GM13977 (cell line): ENCODE measurements at regions of chr1 and their contacts with region 1.

Region 1: DNA sequence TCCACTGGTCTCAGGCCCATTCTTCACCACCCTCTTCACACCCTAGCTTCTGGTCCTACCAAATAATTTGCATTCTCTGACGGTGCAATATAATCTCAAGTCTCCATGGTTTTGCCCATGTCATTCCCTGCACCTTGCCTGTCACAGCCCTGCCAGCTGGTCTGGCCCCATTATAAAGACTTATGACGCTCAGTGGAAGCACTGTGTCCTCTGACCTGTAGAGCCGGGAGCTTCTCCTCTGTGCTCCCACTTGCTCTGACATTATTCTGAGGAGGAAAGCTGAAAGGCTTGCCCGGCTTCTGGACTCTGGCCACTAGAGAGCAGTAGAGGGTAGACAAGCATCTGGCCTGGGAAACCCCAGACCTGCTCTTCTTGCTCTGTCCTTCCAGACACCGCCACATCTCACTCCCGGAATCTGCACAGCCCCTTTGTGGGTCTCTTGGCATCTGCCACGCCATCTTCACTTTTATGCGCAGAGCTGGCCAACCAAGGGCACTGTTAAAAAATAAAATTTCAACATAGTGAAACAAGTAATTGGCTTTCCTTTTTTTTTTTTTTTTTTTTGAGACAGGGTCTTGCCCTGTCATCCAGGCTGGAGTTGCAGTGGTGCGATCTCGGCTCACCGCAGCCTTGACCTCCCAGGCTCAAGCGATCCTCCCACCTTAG is 44.4 kb downstream of the NENF start:
- DNase-seq: peak; percentile 87
- CTCF ChIP-seq: peak; percentile 92

Region 2: DNA sequence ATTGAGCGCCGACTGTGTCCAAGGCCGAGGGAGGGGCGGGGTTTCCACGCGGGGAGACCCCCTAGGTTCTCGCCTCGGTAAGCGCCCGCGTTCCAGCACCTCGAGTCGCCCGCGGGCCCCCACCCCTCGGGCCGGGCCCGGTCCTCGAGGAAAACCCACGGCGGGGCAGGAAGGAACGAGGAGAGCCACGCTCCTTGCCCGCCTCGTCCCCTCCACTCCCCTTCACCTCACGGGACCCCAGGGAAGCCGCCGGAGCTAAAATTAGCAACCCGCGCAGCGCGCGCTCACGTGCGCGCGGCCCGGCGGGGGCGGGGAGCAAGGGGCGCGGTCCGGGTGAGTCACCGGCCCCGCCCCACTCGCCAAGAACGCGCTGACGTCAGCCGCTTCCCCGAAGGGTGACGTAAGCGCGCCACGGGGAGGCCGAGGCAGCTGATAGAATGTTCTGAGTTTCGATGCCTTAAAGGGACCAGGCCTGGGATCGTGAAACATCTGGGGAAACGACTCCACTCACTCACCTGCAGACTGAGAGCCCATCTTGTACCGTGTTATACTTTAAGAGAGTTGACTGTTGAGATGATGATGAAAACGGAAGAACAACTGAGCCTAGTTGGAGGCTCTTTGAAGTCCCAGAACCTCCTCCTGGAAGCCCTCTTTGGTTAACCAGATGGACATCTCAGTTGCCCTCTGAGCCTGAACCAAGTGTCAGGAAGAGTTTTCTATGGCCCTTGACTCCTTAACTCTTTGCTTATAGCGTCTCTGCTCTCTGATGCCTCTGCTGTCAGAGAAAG is 81.7 kb after region 1 on chr1:
- in situ Hi-C with region 1: no loop called
- DNase-seq: peak; percentile 96
- CTCF ChIP-seq: no peak

Region 3: DNA sequence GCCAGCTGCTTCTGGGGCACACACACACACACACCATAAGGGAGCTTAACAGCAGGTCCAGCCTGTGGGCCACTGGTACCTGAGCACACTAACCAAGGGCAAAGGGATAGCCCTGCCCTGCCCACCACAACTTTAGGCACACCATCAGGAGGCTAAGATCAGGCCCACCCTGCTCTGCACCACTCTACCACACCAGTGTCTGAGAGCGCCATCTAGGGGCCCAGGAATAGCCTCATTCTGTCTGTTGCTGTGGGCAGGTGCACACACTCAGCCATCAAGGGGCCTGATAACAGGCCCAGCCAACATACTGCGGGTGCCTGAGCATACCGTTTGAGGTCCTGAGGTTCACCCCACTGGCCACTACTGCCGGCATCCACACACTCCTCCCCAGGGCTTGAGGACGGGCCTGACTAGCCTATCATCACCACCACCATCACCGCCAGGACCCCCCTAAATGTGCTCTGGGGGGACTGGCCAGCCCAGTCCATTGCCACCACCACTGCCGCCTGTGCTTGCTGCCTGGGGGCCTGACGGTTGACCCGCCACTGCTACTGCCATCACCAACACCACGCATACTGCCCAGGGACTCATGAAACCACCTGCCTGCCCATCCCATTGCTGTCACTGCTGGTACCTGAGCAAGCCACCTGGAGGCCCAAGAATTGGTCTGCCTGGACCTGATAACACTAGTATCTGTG is 283.1 kb after region 1 on chr1:
- in situ Hi-C with region 1: loop called (anchors 10 kb)
- DNase-seq: peak; percentile 39
- CTCF ChIP-seq: peak; percentile 80